PC-3 (cell line): ENCODE measurements at regions of chr1 and their contacts with region 1.

Region 1: DNA sequence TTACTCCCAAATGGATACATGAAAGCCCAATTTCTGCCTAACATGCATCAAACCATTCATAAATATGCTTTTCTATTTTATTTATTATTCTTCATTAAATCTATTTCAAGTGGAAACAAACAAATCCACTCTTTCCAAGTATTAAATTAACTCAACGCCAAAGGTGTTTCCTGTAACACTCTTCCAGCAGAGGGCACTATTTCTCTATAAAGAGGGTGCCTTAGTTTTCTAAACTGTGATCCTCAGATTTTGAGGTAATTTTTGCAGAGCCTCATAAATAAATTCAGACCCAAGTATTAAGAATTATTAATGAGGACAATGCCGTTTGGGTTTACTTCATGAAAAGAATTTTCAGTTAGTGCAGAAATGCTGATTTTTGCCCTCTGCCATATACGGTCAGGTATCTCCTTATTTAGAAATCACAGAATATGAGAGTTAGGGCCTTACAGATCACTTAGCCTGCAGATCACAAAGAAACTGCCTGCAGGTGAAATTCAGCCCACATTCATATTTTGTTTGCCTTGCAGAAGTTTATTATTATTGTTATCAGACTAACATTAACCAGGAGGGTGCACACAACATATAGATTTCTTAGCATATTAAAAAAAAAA is 40.1 kb upstream of the MYSM1 start:
- DNase-seq: peak; percentile 89
- ATAC-seq: peak; percentile 77
- H3K4me3 ChIP-seq: no peak overlapping the region
- H3K27ac ChIP-seq: no peak overlapping the region
- H3K4me1 ChIP-seq: no peaks in the 10 kb centered on the region
- H3K27me3 ChIP-seq: no peaks in the 10 kb centered on the region
- CTCF ChIP-seq: peak; percentile 95

Region 2: GRCh38 chr1:58768971-58769808 is 29.2 kb after region 1 on chr1:
- CTCF ChIA-PET with region 1: no interaction called
- POLR2A ChIA-PET with region 1: no interaction called
- intact Hi-C with region 1: loop called (anchors 1 kb)
- DNase-seq: peak; percentile 83
- ATAC-seq: peak; percentile 48
- H3K4me3 ChIP-seq: no peak overlapping the region
- H3K27ac ChIP-seq: no peak overlapping the region
- H3K4me1 ChIP-seq: peaks cover 20% of the 10 kb centered on the region
- H3K27me3 ChIP-seq: no peaks in the 10 kb centered on the region
- CTCF ChIP-seq: peak; percentile 90